Transverse colon (tissue), 4 donors: ENCODE measurements at regions of chr20 and their contacts with region 1.

Region 1: GRCh38 chr20:6698056-6698455 is 69.4 kb upstream of the BMP2 start:
- DNase-seq: no peak
- H3K4me3 ChIP-seq: no peak overlapping the region
- H3K27ac ChIP-seq: no peak overlapping the region
- H3K4me1 ChIP-seq: peaks cover 0 to 26% (median 8%) of the 10 kb centered on the region in 4 donors
- H3K27me3 ChIP-seq: no peaks in the 10 kb centered on the region
- CTCF ChIP-seq: no peak
- EP300 ChIP-seq: no peak
- POLR2A ChIP-seq: no peak

Region 2: DNA sequence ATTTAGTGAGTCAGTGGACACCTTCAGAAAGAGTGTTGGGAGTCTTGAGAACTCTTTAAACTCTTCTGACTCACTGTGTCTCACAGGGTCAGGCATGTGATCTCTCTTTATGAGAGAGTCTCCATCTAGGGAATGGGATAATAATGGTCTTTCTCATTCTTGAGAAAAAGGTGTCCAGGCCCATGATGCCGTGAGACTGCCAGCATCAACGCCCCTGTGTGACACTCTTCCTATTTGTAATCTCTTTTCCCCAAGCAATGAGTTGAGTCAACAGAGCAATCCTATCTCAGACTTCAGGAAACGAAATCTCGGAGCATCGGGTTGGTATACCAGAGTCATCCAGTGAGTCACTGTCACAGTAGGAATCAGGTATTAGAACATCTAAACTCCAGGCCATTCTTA is 12.9 kb before region 1 on chr20:
- in situ Hi-C with region 1: no loop called
- intact Hi-C with region 1: loop called (anchors 1 kb)
- DNase-seq: no peak
- H3K4me3 ChIP-seq: no peak overlapping the region
- H3K27ac ChIP-seq: no peak overlapping the region
- H3K4me1 ChIP-seq: peaks cover 0 to 14% (median under 1%) of the 10 kb centered on the region in 4 donors
- H3K27me3 ChIP-seq: no peaks in the 10 kb centered on the region
- CTCF ChIP-seq: no peak
- EP300 ChIP-seq: no peak
- POLR2A ChIP-seq: no peak

Region 3: DNA sequence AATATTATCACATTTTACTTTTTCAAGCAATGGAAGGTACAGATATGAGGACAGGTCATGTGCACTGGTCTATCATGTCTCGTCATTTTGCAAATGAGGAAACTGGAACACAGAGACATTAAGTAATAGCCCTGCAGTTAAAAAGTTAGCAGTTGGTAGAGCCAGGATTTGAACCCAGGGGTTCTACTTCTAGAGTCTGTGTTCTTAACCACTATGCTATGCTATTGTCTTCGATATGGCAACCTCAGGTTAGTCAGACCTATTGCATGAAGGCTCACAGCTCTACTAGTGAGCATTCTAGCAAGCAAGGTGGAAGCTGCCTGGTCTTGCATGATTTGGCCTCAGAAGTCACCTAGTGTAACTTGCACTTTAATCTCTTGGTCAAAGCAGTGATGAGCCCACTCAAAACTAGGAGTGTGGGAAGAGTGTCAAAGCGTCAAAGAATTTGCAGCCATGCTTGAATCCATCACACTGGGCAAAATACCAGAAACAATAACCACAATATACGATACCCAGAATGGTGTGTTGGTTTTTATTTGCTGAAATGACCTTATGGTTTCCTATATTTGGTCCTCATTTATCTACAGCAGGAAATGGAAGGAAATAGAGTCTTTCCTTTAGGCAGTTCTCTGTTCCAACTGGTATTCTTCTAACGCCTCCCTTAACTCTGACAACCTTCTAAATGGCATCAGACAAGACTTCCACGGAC is 49.0 kb after region 1 on chr20:
- in situ Hi-C with region 1: no loop called
- intact Hi-C with region 1: loop called (anchors 1 kb)
- DNase-seq: no peak
- H3K4me3 ChIP-seq: no peak overlapping the region
- H3K27ac ChIP-seq: no peak overlapping the region
- H3K4me1 ChIP-seq: no peaks in the 10 kb centered on the region
- H3K27me3 ChIP-seq: no peaks in the 10 kb centered on the region
- CTCF ChIP-seq: no peak
- EP300 ChIP-seq: no peak
- POLR2A ChIP-seq: no peak

Region 4: GRCh38 chr20:6863798-6864201 is 165.7 kb after region 1 on chr20:
- in situ Hi-C with region 1: no loop called
- intact Hi-C with region 1: no loop called
- DNase-seq: no peak
- H3K4me3 ChIP-seq: no peak overlapping the region
- H3K27ac ChIP-seq: no peak overlapping the region
- H3K4me1 ChIP-seq: no peaks in the 10 kb centered on the region
- H3K27me3 ChIP-seq: no peaks in the 10 kb centered on the region
- CTCF ChIP-seq: no peak
- EP300 ChIP-seq: no peak
- POLR2A ChIP-seq: no peak